ENCODE measurements at regions of chr13 and their contacts with region 1.

Region 1: DNA sequence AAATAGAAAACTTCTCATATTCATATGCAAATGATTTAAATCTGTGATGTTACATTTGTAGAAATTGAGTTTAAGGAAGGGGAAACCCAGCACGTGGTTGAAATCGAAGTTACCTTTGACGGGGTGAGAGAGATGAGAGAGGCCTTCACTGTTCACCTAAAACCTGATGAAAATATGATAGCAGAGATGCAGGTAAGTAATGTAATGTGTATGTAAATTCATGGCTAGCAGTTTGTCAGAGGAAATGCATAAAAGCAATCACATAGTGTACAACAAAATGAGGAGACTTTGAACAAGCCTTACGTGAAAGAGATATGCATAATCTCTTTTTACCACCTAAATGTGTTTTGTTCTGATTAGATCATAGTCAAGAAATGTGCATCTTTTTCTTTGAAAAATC is 134.6 kb downstream of the STOML3 start:
- DNase-seq: no peak
- ATAC-seq: no peak
- H3K4me3 ChIP-seq: no peak overlapping the region
- H3K27ac ChIP-seq: no peak overlapping the region
- H3K4me1 ChIP-seq: no peaks in the 10 kb centered on the region
- H3K27me3 ChIP-seq: no peaks in the 10 kb centered on the region
- CTCF ChIP-seq: no peak

Region 2: GRCh38 chr13:38693641-38694040 is 162.4 kb before region 1 on chr13:
- intact Hi-C with region 1: loop called in 1 of 2 experiments (anchors 5 kb)
- DNase-seq: no peak
- ATAC-seq: peak in 3 of 4 donors; percentile 24 to 54 (median 43)
- H3K4me3 ChIP-seq: peak overlapping the region; percentile 31
- H3K27ac ChIP-seq: peak overlapping the region; percentile 76
- H3K4me1 ChIP-seq: peaks cover 37% of the 10 kb centered on the region
- H3K27me3 ChIP-seq: no peaks in the 10 kb centered on the region
- CTCF ChIP-seq: no peak

Region 3: GRCh38 chr13:38842523-38842922 is 13.5 kb before region 1 on chr13:
- intact Hi-C with region 1: no loop called
- DNase-seq: no peak
- ATAC-seq: no peak
- H3K4me3 ChIP-seq: no peak overlapping the region
- H3K27ac ChIP-seq: no peak overlapping the region
- H3K4me1 ChIP-seq: peaks cover 14% of the 10 kb centered on the region
- H3K27me3 ChIP-seq: no peaks in the 10 kb centered on the region
- CTCF ChIP-seq: no peak

Region 4: DNA sequence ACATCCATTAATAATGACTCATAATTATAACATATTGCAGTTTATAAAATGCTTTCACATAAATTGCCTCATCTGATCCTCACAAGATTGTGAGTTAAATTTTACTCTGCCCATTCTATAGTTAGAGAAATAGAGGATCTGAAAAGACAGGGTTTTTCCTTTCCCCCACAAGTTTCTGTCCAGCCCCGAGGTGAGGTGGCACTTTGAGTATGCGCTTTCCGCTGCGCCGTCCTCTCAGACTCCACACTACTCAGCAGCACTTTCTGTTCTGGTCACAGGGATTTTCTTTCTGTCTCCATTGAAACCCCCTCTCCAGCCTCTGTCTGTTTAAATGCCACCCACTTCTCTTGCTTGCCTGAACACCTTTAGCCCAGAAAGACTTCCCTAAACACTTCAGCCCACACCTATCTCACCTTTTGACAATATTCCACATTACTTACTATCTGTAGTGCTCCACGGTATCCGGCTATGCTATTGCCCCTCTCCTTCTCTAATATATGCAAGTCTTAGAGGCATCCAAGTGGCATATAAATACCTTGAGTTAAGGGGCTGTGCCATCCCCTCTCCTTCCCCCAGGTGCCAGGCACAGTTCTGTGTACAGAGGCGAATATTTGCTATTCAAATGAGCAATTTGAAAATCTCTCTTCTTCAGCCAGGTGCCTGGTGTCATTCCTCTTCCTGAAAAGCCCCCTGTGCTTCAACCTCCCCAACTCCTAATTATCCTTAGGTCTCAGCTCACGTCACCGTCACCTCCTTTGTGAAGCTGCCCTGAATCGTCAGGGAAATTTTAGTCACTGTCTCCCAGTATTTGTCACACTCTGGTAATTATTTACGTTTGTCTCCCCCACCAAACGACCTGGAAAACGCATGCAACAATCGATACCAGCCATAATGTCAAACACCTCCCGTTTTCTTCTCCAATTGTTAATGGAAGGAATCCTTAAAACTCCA is 450.8 kb after region 1 on chr13:
- intact Hi-C with region 1: no loop called
- DNase-seq: no peak
- ATAC-seq: no peak
- H3K4me3 ChIP-seq: no peak overlapping the region
- H3K27ac ChIP-seq: no peak overlapping the region
- H3K4me1 ChIP-seq: no peaks in the 10 kb centered on the region
- H3K27me3 ChIP-seq: no peaks in the 10 kb centered on the region
- CTCF ChIP-seq: no peak